Endothelial cell of umbilical vein (primary cell): ENCODE measurements at regions of chr2 and their contacts with region 1.

Region 1: DNA sequence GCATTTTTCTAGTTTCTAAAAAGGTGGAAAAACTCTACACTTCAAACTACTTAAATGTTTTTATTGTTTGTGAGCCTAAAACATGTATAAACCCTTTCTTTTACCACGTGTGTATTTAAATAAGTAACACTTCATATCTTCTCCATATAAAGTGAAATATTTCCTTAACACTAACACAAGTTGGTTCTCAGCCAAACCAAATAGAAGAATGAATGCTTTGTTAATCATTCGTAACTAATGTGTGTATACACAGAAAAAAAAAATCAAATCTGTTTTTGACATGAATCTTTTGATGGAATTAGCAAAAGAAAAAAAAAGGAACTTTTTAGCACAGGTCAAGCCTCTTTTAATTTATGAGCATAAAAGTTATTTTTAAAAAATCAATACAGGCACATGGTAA is 89.3 kb downstream of the EHBP1 start:
- DNase-seq: peak; percentile 78
- H3K4me3 ChIP-seq: peak overlapping the region in 1 of 3 experiments; percentile 17
- H3K27ac ChIP-seq: no peak overlapping the region
- H3K4me1 ChIP-seq: peaks cover 13% of the 10 kb centered on the region
- H3K27me3 ChIP-seq: no peaks in the 10 kb centered on the region
- CTCF ChIP-seq: no peak
- POLR2A ChIP-seq: no peak

Region 2: GRCh38 chr2:62920070-62920469 is 125.3 kb after region 1 on chr2:
- CTCF ChIA-PET with region 1: no interaction called
- POLR2A ChIA-PET with region 1: no interaction called
- dilution Hi-C with region 1: no loop called
- intact Hi-C with region 1: loop called (anchors 10 kb)
- DNase-seq: no peak
- H3K4me3 ChIP-seq: no peak overlapping the region
- H3K27ac ChIP-seq: no peak overlapping the region
- H3K4me1 ChIP-seq: no peaks in the 10 kb centered on the region
- H3K27me3 ChIP-seq: no peaks in the 10 kb centered on the region
- CTCF ChIP-seq: no peak
- POLR2A ChIP-seq: no peak